Right ventricle myocardium inferior (tissue), 1 donor: ENCODE measurements at regions of chr15 and their contacts with region 1.

Region 1: DNA sequence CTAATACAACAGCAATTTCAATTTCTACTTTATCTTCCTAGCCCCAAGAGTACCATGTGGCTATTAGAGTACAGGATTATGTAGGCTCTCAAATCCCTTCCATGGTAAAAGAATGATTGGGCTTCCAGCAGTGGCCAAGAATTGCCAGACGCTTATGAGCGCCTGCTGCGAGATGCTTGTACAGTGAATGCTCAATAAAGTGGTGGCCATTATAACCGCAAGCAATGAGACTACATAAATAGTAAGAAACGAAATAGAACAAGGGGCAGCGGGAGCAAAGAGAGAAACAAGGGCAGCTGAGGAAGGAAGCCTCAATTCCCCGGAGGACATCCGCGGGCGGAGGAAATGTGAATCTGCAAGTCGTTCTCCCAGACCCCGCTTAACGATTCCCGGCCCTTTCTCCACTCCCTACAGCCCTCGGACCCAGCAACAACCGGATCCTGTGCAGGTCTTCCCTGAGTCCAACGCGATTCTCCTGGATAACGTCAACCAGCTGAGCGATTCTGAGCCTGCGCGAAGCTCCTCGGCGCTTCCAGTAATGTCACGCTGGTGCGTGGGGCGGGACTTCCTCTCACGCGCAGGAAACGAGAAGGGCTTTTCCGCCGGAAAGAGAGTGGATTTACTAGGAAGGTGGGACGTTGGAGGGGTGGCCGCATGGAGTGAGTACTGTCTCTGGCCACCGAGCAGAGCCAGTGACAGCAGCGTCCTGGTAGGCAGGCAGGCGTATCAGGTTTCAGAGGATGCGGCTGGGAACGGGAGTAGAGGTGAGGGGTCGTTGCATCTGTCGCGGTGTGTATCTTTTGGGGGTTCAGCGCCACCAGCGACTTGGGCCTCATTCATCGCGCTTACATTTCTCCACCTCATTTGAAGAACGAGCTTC is 40.5 kb upstream of the AP3B2 start:
- DNase-seq: peak; percentile 94
- ATAC-seq: peak; percentile 98

Region 2: GRCh38 chr15:82540055-82540983 is 209.9 kb before region 1 on chr15 and contains the start of gene RPS17:
- intact Hi-C with region 1: loop called (anchors 5 kb)
- DNase-seq: peak; percentile 98
- ATAC-seq: peak; percentile 99
- total RNA-seq, gene RPS17: 867 TPM

Region 3: DNA sequence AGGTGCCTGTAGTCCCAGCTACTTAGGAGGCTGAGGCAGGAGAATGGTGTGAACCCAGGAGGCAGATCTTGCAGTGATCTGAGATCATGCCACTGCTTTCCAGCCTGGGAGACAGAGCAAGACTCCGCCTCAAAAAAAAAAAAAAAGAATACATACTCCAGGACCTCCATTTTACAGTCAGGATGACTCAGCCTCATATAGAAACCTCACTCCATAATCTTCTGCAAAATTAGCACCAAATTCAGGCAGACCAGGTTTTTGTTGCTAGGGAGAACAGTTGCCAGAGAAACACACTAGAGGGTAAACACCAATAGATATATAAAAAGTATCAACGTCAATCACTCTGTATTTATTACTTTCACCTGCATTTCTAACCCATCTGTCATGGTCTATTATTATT is 12.2 kb before region 1 on chr15:
- intact Hi-C with region 1: no loop called
- DNase-seq: no peak
- ATAC-seq: no peak

Region 4: DNA sequence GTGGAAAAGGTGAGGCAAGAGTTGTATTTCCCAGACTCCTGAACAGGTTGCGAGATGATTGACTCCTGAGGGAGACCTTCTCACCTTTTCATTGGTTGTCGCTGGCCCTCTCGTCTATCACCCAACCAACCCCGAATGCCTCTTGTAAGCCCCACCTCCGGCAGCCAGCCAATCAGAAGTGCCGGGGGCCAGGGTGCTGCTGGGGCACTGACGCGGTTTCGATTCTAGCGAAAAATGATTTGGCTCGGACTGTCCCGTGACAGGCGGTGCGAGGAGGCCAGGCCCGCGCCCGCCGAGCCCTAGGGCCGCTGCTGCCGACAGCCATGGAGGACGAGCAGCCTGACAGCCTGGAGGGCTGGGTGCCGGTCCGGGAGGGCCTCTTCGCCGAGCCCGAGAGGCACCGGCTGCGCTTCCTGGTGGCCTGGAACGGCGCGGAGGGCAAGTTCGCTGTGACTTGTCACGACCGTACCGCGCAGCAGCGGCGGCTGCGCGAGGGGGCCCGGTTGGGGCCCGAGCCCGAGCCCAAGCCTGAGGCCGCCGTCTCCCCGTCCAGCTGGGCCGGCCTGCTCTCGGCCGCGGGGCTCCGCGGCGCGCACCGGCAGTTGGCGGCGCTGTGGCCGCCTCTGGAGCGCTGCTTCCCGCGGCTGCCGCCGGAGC is 59.3 kb after region 1 on chr15 and contains the start of gene WHAMM:
- intact Hi-C with region 1: loop called (anchors 2 kb)
- DNase-seq: peak; percentile 99
- ATAC-seq: peak; percentile 97
- total RNA-seq, gene WHAMM: 5.7 TPM

Region 5: GRCh38 chr15:82985688-82986441 is 235.7 kb after region 1 on chr15 and contains the start of gene RAMAC:
- intact Hi-C with region 1: loop called (anchors 10 kb)
- DNase-seq: peak; percentile 96
- ATAC-seq: peak; percentile 95
- total RNA-seq, gene RAMAC: 12.8 TPM

Region 6: GRCh38 chr15:83323296-83323711 is 573.1 kb after region 1 on chr15:
- intact Hi-C with region 1: no loop called
- DNase-seq: no peak
- ATAC-seq: no peak